ENCODE measurements at regions of chr10 and their contacts with region 1.

Region 1: GRCh38 chr10:119686439-119687191 is 35.4 kb downstream of the BAG3 start:
- DNase-seq: peak; percentile 34
- H3K4me3 ChIP-seq: peak overlapping the region; percentile 44
- CTCF ChIP-seq: peak; percentile 90

Region 2: GRCh38 chr10:118531105-118531852 is 1155.3 kb before region 1 on chr10:
- CTCF ChIA-PET with region 1: no interaction called
- POLR2A ChIA-PET with region 1: no interaction called
- DNase-seq: no peak
- H3K4me3 ChIP-seq: no peak overlapping the region
- CTCF ChIP-seq: no peak

Region 3: DNA sequence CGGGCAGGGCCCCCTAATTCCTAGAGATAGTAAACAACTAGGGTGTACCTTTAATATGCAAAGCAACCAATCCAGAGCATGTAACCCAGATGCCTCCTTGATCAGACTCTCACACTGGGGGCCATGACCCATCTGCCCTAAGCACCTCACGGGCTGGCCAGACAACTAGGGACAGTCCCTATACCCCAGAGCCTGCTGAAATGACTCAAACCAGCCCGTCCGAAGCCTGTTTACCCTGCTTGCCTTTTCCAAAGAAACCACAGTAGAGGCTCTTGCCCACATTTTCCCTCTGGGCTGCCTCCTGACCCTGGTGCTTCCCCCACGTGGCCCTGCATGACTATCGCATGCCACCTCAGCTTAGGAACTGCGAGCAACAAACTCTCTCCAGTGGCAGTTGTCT is 190.3 kb before region 1 on chr10:
- CTCF ChIA-PET with region 1: no interaction called
- POLR2A ChIA-PET with region 1: no interaction called
- DNase-seq: no peak
- H3K4me3 ChIP-seq: no peak overlapping the region
- CTCF ChIP-seq: no peak

Region 4: GRCh38 chr10:119608316-119609155 is 78.1 kb before region 1 on chr10:
- CTCF ChIA-PET with region 1: interaction called, 13 read pairs
- POLR2A ChIA-PET with region 1: no interaction called
- DNase-seq: no peak
- H3K4me3 ChIP-seq: no peak overlapping the region
- CTCF ChIP-seq: peak; percentile 59

Region 5: GRCh38 chr10:119650692-119651513 is 35.7 kb before region 1 on chr10 and contains the start of gene BAG3:
- CTCF ChIA-PET with region 1: interaction called, 11 read pairs
- POLR2A ChIA-PET with region 1: interaction called, 3 read pairs
- DNase-seq: peak; percentile 31
- H3K4me3 ChIP-seq: peak within 1 kb of the TSS; percentile 93
- CTCF ChIP-seq: no peak

Region 6: DNA sequence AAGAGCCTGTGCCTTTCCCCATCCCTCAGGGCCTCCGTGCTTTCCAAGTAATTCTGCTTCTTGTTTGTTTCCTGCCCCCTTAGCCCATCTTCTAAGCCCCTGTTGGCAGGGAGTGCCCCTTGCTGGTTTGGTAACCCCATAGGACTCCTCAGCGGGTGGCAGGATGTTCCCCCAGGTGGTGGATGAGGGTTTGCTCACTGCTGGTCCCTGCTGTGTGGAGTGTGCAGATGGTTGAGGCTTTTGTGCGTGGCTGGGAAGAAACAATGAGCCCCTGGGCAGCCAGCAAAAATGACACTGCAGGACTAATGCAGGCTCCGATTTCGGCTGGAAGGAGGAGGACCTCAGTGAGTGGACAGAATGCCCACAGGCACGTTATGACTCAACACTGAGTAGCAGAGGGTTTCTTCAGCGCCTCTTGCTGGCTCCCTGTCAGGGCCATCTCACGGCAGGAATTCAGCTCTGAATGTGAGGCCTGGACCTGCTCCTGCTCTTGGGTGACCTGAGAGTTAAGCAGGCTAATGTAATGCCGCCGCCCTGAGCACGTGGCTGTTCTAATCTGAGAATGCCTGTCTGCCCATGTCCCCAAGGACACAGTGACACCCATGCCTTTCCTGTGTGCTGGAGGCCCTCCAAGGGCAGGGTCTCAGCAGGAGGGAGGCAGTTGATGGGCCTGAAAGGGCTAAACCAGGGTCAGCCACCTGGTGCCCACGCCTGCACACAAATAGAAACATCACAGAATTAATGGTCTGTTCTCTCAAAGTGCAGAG is 18.9 kb before region 1 on chr10:
- CTCF ChIA-PET with region 1: interaction called, 25 read pairs
- POLR2A ChIA-PET with region 1: no interaction called
- DNase-seq: peak; percentile 79
- H3K4me3 ChIP-seq: peak overlapping the region; percentile 33
- CTCF ChIP-seq: peak; percentile 14

Region 7: DNA sequence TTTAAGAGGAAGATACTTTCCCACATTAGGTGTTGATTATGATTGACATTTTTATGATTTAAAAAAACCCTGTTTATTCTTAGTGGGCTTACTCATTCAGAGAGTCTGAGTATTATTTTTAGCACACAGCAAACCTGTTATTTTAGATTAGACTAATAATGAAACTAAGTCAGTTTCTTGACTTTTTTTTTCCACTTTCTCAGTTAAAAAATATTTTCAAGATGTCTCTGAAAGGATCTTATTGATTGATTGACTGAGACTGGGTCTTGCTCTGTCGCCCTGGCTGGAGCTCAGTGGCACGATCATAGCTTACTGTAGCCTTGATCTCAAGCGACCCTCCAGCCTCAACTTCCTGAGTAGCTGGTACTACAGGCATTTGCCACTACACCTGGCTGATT is 18.8 kb after region 1 on chr10:
- CTCF ChIA-PET with region 1: interaction called, 63 read pairs
- POLR2A ChIA-PET with region 1: no interaction called
- DNase-seq: no peak
- H3K4me3 ChIP-seq: no peak overlapping the region
- CTCF ChIP-seq: no peak

Region 8: DNA sequence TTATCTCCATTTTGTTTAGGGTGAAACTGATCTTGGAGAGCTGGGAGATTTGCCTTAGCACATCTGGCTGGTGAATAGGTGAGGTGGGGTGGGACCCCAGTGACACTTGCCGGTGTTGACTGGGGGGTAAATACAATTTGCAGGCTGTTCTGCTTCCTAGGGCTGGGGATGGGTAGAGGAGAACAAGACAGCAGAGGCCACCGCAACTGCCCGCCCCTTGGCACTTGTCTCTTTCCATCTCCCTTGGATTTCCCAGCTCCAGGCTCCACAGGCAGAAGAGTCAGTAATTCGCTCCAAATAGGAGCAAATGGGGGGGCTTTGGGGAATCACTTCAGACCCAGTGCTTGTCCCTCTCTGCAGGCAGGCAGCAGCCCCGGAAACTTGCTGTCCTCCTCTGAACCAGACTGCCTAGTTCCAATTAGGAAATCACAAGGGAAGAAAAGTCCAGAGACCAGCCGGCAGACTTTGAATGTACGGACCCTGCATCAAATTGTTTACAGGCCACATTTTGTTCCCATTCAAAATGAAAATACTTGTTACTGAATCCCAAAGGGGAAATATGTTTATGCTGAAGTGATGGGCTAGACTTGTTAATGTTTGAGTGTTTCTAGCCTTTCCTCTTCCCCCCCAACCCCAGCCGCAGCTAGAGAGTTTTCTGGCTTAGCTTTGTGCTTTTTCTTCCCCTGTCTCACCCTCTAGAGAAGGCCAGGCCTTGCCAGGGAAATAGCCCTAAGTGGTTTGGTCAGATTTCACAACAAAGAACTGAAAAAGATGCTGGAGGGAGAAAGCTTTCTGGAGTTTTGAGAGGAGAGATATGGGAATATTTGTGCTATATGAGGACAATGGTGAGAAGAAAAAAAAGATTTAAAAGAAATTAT is 29.3 kb after region 1 on chr10:
- CTCF ChIA-PET with region 1: interaction called, 18 read pairs
- POLR2A ChIA-PET with region 1: no interaction called
- DNase-seq: no peak
- H3K4me3 ChIP-seq: no peak overlapping the region
- CTCF ChIP-seq: no peak

Region 9: DNA sequence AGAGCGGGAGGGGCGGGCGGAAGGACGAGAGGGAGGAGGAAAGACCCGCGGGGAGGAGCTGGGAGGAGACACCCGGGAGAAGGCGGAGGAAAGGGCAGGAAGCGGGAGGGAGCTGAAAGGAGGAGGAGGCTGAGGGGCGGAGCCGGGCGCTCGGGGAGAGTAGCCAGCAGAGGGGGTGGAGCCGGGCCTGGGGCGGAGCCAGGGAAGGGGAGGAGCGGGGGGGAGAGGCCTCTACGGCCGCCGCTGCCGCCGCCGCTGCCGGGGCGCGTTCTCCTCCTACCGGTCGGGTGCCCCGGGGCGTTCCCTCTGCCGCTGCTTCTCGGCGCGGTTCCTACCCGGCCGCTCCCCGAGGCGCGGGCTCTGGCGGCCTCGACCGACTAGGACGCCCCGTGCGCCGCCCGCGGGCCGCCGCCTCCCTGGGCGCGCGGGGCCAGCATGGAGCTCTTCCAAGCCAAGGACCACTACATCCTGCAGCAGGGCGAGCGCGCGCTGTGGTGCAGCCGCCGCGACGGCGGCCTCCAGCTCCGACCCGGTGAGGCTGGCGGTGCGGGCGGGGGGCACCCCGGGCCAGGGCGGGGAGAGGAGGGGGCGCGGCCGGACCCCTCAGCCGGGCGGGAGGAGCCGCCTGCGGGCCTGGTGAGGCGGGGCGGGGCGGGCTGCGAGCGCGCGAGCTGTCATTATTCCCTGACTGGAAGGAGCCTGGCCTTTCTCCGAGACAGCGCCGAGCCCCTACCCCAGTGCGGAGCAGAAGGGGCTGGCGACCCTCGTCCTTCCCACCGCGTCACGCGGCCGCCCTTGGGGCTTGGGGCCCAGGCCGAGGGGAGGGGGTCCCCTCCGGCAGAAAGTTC is 39.4 kb after region 1 on chr10 and contains the start of gene INPP5F:
- CTCF ChIA-PET with region 1: interaction called, 28 read pairs
- POLR2A ChIA-PET with region 1: interaction called, 4 read pairs
- DNase-seq: peak; percentile 73
- H3K4me3 ChIP-seq: peak within 1 kb of the TSS; percentile 69
- CTCF ChIP-seq: peak; percentile 36

Measured in AG04449 (cell line).